Sciatic nerve (tissue), 2 donors: ENCODE measurements at regions of chr2 and their contacts with region 1.

Region 1: DNA sequence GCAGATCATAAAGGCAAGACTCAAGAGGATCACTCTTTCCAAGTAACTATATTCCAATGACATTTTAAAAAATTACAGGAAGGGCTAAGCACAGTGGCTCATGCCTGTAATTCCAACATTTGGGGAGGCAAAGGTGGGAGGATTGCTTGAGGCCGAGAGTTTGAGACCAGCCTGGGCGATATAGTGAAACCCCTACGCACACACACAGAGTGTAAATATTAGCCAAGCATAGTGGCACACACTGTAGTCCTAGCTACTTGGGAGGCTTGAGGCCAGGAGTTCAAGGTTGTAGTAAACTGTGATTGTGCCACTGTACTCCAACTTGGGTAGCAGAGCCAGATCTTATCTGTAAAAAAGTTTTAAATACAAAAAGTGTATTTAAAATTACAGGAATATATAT is 450.2 kb upstream of the NRP2 start:
- DNase-seq: no peak
- ATAC-seq: no peak

Region 2: DNA sequence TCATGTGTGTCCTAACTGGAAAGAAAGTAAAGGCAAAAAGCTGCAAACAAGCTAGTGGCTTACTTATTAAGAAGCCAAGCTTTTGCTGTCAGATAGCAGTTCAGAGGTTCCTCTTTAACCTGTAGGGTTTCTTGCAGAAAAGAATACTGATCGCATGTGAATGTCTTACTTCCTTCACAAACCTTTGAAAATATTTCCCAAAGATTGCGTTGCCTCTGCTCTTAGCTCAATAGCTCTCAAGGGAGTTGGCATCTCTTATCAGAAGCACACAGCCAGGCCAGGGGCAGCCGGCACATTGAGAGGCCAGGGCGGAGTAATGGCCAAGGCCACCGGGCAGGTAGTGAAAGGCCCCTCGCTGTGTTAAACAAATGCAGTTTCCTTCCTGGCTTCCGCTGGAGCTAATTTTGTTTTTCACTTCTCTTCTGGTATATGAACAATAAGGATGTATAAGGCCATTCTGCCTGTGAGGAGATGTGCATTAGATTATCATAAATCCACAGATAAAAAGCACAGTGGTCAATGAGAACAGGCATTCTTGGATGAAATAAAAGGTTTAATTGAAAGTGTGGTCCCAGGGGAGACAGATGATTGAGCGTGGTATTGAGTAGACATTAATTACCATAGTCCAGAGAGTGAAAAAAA is 92.1 kb before region 1 on chr2:
- intact Hi-C with region 1: no loop called
- DNase-seq: no peak
- ATAC-seq: no peak

Region 3: GRCh38 chr2:205245652-205246051 is 13.6 kb after region 1 on chr2:
- intact Hi-C with region 1: loop called (anchors 1 kb)
- DNase-seq: no peak
- ATAC-seq: peak; percentile 90